ENCODE measurements at regions of chr7 and their contacts with region 1.

Region 1: DNA sequence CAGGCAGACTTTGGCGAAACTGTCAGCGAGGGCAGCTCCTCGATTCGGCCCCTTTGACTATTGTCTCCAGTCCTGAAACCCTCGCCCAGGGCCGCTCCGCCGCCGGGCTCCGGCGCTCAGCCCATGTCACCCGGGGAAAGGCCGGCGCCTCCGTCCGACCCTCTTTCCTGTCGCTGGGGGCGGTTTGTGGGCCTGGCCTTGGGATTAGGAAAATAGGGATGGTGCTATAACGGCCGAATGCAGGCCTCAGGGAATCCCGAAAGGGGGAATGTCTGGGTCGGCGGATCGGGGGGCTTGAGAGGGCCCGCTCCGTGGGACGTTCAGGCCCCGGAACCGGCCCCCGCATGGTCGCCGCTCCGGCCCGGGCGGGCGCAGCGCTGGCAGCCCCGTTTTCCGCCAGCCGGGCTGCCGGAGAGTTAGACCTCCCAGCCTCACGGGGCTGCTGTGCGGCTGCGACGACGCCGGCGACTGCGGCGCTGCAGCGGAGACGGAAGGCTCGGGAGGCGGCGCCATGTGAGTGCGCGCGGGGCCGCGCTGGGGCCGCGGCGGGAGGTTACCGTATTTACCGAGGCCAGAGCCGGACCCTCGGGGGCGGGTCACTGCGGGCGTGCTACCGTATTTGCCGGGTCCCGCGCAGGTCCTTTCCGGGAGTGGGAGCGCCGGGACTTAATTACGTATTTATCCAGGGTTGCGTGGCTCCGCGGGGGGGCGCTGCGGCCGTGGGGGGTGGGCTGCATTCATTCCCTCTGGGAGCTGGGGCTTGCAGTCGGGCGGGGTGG is 25.9 kb downstream of the ZNF775 start:
- DNase-seq: peak; percentile 85
- ATAC-seq: peak; percentile 83
- H3K4me3 Mint-ChIP-seq: peak overlapping the region; percentile 94
- H3K27ac Mint-ChIP-seq: peak overlapping the region; percentile 97
- H3K4me1 Mint-ChIP-seq: peaks cover 49% of the 10 kb centered on the region
- H3K27me3 Mint-ChIP-seq: no peaks in the 10 kb centered on the region

Region 2: DNA sequence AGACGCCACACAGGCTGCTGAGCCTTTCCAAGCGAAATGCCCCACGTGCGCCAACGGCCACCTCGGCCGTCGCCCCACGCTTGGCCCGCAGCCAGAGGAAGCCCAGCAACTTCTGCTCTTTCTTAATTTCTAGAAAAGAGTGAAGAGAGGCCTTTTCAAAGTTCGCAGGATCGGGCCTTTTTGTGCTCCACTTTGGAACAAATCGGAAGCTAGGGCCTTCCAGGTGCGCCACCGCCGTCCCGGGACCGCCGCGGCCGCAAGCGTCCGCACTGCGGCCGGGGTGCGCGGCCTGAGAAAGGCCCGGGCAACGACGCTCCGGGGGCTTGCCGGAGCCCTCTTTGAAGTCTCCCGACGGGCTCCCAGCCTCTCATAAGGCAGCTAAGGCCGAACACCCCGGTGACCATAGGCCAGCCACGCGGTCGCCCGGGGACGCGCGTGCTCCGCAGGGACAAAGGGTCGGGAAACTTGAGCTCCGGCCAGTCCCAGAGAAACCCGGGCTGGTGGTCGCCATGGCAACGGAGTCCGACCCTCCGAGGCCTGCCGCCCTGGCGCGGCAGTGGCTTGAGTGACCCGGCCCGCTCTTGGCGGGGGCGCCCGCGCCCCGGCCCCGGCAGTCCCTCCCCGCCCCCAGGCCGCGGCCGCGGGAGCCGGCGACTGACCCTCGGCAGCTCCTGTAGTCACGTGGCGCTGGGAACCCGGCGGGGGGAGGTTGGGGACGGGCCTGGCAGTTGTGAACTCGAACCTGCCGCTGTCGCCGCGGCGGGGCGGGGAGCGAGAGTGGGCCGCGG is 36.7 kb before region 1 on chr7 and contains the start of gene REPIN1:
- CTCF ChIA-PET with region 1: interaction called, 11 read pairs
- POLR2A ChIA-PET with region 1: interaction called, 9 read pairs
- DNase-seq: peak; percentile 83
- ATAC-seq: peak; percentile 73
- H3K4me3 Mint-ChIP-seq: peak within 1 kb of the TSS; percentile 96
- H3K27ac Mint-ChIP-seq: peak within 1 kb of the TSS; percentile 91
- H3K4me1 Mint-ChIP-seq: peaks cover 46% of the 10 kb centered on the region
- H3K27me3 Mint-ChIP-seq: no peaks in the 10 kb centered on the region
- total RNA-seq, gene REPIN1: 40.9 to 43.1 TPM

Region 3: GRCh38 chr7:150378853-150379440 is 26.0 kb before region 1 on chr7 and contains the start of gene ZNF775:
- CTCF ChIA-PET with region 1: interaction called, 20 read pairs
- POLR2A ChIA-PET with region 1: interaction called, 6 read pairs
- DNase-seq: peak; percentile 94
- ATAC-seq: peak; percentile 99
- H3K4me3 Mint-ChIP-seq: peak within 1 kb of the TSS; percentile 86
- H3K27ac Mint-ChIP-seq: peak within 1 kb of the TSS; percentile 72
- H3K4me1 Mint-ChIP-seq: peaks cover 40% of the 10 kb centered on the region
- H3K27me3 Mint-ChIP-seq: no peaks in the 10 kb centered on the region
- total RNA-seq, gene ZNF775: 6.7 to 7.7 TPM

Region 4: GRCh38 chr7:150420987-150421674 is 16.1 kb after region 1 on chr7:
- CTCF ChIA-PET with region 1: interaction called, 35 read pairs
- POLR2A ChIA-PET with region 1: interaction called, 3 read pairs
- DNase-seq: peak; percentile 91
- ATAC-seq: peak; percentile 100
- H3K4me3 Mint-ChIP-seq: no peak overlapping the region
- H3K27ac Mint-ChIP-seq: no peak overlapping the region
- H3K4me1 Mint-ChIP-seq: peaks cover 12% of the 10 kb centered on the region
- H3K27me3 Mint-ChIP-seq: peaks cover 4% of the 10 kb centered on the region

Region 5: GRCh38 chr7:150458756-150459155 is 53.8 kb after region 1 on chr7:
- CTCF ChIA-PET with region 1: no interaction called
- POLR2A ChIA-PET with region 1: no interaction called
- DNase-seq: no peak
- ATAC-seq: no peak
- H3K4me3 Mint-ChIP-seq: no peak overlapping the region
- H3K27ac Mint-ChIP-seq: no peak overlapping the region
- H3K4me1 Mint-ChIP-seq: peaks cover 59% of the 10 kb centered on the region
- H3K27me3 Mint-ChIP-seq: no peaks in the 10 kb centered on the region